ENCODE measurements at regions of chr11 and their contacts with region 1.

Region 1: GRCh38 chr11:122578168-122578825 is 77.2 kb upstream of the UBASH3B start:
- DNase-seq: no peak
- ATAC-seq: 0 out of 2 replicates have a peak, but pooled peaks have one; percentile 20
- H3K4me3 Mint-ChIP-seq: no peak overlapping the region
- H3K27ac Mint-ChIP-seq: no peak overlapping the region
- H3K4me1 Mint-ChIP-seq: peaks cover 10% of the 10 kb centered on the region
- H3K27me3 Mint-ChIP-seq: peaks cover 2% of the 10 kb centered on the region; the same call in 1 of the 2 replicates
- CTCF ChIP-seq: no peak

Region 2: DNA sequence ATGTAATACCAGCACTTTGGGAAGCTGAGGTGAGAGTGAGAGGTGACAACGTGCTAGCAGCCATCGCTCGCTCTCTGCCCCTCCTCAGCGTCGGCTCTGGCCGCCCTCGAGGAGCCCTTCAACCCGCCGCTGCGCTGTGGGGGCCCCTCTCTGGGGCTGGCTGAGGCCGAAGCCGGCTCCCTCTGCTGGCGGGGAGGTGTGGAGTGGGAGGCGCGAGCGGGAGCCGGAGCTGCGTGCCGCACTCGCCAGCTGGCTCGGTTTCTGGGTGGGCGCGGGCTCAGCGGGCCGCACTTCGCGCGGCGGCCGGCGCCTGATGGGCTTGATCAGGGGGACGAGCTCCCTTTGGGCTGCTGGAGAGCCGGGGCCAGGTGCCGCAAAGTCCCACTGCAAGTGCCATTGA is 21.7 kb before region 1 on chr11:
- CTCF ChIA-PET with region 1: interaction called, 10 read pairs
- POLR2A ChIA-PET with region 1: no interaction called
- DNase-seq: peak; percentile 79
- ATAC-seq: peak; percentile 62
- H3K4me3 Mint-ChIP-seq: peak overlapping the region; percentile 58
- H3K27ac Mint-ChIP-seq: no peak overlapping the region
- H3K4me1 Mint-ChIP-seq: peaks cover 5% of the 10 kb centered on the region; the same call in 1 of the 2 replicates
- H3K27me3 Mint-ChIP-seq: peaks cover 13% of the 10 kb centered on the region
- CTCF ChIP-seq: no peak; the same call in 1 of the 2 replicates

Region 3: DNA sequence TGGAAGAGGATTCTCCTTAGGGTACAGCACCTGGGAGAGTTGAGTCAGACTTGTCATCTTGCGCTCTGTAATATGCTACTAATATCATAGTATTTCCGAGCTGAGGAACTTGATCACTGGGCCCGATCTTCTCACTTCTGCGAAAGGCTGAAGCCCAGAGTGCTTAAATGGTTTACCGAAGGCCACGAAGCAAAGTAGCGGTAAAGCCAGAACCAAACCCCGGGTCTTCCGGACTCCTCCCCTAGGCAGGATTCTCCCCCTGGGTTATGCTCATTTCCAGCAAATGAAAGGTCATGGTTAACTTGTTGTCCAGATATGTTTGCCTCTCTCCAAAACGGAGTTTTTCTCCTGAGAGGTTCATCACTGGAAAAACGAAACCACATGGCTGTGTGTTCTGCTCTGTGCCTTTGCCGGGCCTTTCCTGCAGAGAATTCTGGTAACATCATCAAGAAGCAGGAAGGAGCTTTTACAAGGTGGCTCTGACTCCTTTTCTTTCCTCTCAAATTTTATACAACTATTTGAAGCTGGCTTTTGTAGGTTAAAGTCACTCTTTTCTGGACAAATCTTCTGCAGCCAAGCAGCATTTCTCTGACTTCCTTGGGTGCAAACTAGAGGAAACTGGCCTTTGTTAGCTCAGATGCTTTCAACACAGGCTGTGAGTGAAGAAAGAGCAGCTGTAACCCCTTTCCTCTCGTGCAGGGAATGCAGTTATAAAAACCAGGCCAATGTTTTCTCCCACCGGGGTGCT is 112.7 kb after region 1 on chr11:
- CTCF ChIA-PET with region 1: no interaction called
- POLR2A ChIA-PET with region 1: no interaction called
- DNase-seq: no peak
- ATAC-seq: peak; percentile 41; the same call in 1 of the 2 replicates
- H3K4me3 Mint-ChIP-seq: no peak overlapping the region
- H3K27ac Mint-ChIP-seq: peak overlapping the region; percentile 58
- H3K4me1 Mint-ChIP-seq: peaks cover 23% of the 10 kb centered on the region
- H3K27me3 Mint-ChIP-seq: no peaks in the 10 kb centered on the region
- CTCF ChIP-seq: no peak

Measured in WTC11 (cell line).